ENCODE measurements at regions of chr5 and their contacts with region 1.

Region 1: DNA sequence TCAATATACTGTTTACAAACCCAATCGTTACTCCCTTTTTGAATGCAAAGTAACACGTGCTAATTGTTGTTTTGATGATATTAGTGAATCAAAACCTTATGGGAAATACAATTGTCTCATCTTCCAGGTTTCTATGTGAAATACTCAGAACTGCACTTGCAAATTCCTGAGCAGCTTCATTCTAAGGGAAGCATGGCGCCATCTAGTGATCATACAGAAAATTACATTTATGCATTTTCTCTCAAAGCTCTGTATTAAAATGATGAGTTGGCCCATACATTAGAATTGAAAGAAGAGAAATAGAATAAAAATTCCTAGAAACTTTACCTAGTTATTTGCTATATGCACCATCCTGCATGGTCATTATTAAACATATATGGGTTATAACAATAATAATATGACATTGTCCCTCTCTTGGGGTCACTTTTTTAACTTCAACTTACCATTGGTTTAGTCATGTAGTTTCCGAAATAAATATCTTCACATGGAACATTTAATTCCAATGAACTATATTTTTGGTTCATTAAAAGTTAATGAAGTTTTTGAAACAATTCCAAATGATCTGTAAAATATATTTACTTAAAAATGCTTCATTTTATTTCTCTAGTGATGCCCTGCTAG is 220.0 kb downstream of the PDE4D start:
- DNase-seq: no peak
- H3K4me3 ChIP-seq: no peak overlapping the region
- H3K27ac ChIP-seq: no peak overlapping the region
- H3K4me1 ChIP-seq: no peaks in the 10 kb centered on the region
- H3K27me3 ChIP-seq: no peaks in the 10 kb centered on the region
- CTCF ChIP-seq: peak; percentile 58 to 85 (median 79)
- POLR2A ChIP-seq: no peak

Region 2: DNA sequence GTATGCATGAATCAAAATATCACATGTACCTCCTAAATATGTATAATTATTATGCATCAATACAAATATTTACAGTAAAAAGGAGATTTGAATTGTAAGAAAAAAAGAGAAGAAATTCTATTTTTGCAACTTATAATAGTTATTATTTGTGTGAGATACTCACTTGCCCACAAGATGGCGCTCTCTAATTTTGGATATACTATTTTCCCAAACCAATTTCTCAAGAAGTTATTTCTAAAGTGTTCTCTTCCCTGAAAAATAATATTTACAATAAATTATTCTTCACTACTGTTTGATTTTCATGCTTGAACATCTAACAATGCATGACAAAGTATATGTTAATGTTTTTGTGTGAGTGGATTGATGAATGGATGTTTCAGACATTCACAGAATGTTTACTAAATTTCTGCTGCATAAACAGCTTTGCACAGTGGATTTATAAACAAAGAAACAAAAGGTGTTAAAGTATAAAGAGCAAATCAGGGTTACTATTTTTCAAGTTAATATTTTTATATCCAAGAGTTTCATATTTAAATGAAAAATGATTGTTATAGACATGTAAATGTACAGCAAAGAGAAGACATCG is 283.4 kb before region 1 on chr5:
- intact Hi-C with region 1: loop called (anchors 5 kb)
- DNase-seq: no peak
- H3K4me3 ChIP-seq: no peak overlapping the region
- H3K27ac ChIP-seq: no peak overlapping the region
- H3K4me1 ChIP-seq: no peaks in the 10 kb centered on the region
- H3K27me3 ChIP-seq: no peaks in the 10 kb centered on the region
- CTCF ChIP-seq: peak in 5 of 6 experiments; percentile 43 to 70 (median 64)
- POLR2A ChIP-seq: no peak

Region 3: GRCh38 chr5:59506285-59506877 is 167.2 kb before region 1 on chr5:
- intact Hi-C with region 1: loop called (anchors 10 kb)
- DNase-seq: no peak
- H3K4me3 ChIP-seq: no peak overlapping the region
- H3K27ac ChIP-seq: no peak overlapping the region
- H3K4me1 ChIP-seq: no peaks in the 10 kb centered on the region
- H3K27me3 ChIP-seq: no peaks in the 10 kb centered on the region
- CTCF ChIP-seq: peak in 5 of 6 experiments; percentile 27 to 69 (median 41)
- POLR2A ChIP-seq: no peak

Region 4: GRCh38 chr5:59608745-59609144 is 64.8 kb before region 1 on chr5:
- intact Hi-C with region 1: no loop called
- DNase-seq: no peak
- H3K4me3 ChIP-seq: no peak overlapping the region
- H3K27ac ChIP-seq: no peak overlapping the region
- H3K4me1 ChIP-seq: peaks cover 0 to 4% (median 3%) of the 10 kb centered on the region in 3 donors
- H3K27me3 ChIP-seq: no peaks in the 10 kb centered on the region
- CTCF ChIP-seq: no peak
- POLR2A ChIP-seq: no peak

Region 5: DNA sequence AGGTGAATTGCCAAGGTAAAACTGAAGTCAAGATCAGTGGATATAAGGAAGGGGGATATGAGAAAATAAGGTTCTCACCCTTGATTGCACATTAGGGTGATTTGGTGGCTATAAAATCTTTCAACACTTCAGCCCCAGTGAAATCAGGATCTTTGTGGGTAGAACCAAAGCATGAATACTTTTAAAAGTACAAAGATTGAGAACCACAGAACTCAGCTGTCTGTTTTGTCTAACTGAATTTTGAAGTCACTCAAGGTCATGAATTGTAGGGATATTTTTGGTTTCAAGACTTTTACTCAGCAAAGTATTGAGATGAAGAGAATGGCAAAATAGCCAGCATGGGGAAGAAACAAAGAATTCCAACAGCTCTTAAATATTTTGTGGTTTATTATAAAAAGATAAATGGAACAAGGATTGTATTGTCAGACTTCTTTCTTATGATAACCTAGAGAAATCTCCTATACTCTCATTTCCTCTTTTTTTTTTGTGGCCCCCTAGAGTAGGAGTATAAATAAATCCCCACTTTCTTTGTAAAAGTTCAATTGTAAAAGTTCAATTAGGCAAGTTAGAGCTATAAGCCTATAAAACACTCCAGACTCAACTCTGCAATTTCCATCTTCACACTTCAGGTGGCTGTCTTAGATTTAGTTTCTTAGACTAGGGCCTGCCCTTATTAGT is 52.9 kb before region 1 on chr5:
- intact Hi-C with region 1: no loop called
- DNase-seq: no peak
- H3K4me3 ChIP-seq: no peak overlapping the region
- H3K27ac ChIP-seq: no peak overlapping the region
- H3K4me1 ChIP-seq: no peaks in the 10 kb centered on the region
- H3K27me3 ChIP-seq: no peaks in the 10 kb centered on the region
- CTCF ChIP-seq: no peak
- POLR2A ChIP-seq: no peak

Region 6: GRCh38 chr5:59799668-59800346 is 126.3 kb after region 1 on chr5:
- intact Hi-C with region 1: loop called (anchors 10 kb)
- DNase-seq: no peak
- H3K4me3 ChIP-seq: peak overlapping the region; percentile 10 to 48 (median 30)
- H3K27ac ChIP-seq: peak overlapping the region; percentile 65 to 89 (median 81)
- H3K4me1 ChIP-seq: peaks cover 0 to 30% (median 9%) of the 10 kb centered on the region in 3 donors
- H3K27me3 ChIP-seq: no peaks in the 10 kb centered on the region
- CTCF ChIP-seq: peak; percentile 43 to 91 (median 80)
- POLR2A ChIP-seq: no peak

Measured in esophagus squamous epithelium (tissue), 5 donors.